K562 (cell line): ENCODE measurements at regions of chr13 and their contacts with region 1.

Region 1: GRCh38 chr13:91369441-91369831 is 21.9 kb downstream of the MIR17HG start:
- DNase-seq: peak in 2 of 4 experiments; percentile 60 to 67
- ATAC-seq: peak; percentile 12; the same call in 2 of the 3 replicates
- H3K4me3 ChIP-seq: no peak overlapping the region
- H3K27ac ChIP-seq: no peak overlapping the region
- H3K4me1 ChIP-seq: peaks cover 0 to 9% of the 10 kb centered on the region in 2 experiments; a peak in 3 of 5 replicates
- H3K27me3 ChIP-seq: no peaks in the 10 kb centered on the region
- CTCF ChIP-seq: no peak
- EP300 ChIP-seq: no peak
- POLR2A ChIP-seq: no peak
- RAD21 ChIP-seq: no peak

Region 2: DNA sequence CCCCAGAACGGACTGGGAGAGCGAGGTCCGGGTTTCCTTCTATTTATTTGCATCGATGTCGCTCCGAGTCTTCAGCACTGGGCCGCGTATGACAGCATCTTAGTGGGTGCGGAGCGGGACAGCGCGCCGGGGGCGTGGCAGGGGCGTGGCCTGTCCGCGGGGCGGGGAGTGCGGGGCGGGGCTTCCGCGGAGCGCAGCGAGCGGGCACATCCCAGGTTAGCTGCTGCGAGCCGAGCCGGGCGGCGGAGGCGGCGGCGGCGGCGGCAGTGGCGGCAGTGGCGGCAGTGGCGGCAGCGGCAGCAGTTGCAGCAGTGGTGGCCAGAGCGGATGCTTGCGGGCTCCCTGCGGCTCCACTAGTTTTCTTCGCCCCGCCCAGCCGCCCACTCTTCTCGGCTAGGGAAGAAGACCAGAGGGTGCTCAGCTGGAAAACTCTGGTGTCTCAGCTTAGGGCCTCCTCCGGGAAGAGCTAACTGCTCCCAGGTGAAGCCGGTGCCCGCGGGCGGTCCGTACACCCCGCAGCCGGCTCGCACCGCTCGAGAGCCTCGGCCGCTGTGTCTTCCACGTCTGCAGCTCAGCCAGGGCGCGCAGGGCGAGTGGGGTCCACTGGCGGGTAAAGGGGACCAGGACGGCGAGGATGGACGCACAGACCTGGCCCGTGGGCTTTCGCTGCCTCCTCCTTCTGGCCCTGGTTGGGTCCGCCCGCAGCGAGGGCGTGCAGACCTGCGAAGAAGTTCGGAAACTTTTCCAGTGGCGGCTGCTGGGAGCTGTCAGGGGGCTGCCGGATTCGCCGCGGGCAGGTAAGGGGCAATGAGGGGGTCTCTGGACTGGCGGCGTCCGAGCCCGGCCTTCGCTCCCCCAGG is 29.2 kb after region 1 on chr13 and contains the start of gene GPC5:
- CTCF ChIA-PET with region 1: no interaction called
- POLR2A ChIA-PET with region 1: interaction called, 4 read pairs
- in situ Hi-C with region 1: no loop called
- intact Hi-C with region 1: loop called (anchors 5 kb)
- DNase-seq: peak; percentile 94 to 100 (median 100)
- ATAC-seq: peak; percentile 100
- H3K4me3 ChIP-seq: peak within 1 kb of the TSS; percentile 28
- H3K27ac ChIP-seq: no peak within 1 kb of the TSS
- H3K4me1 ChIP-seq: peaks cover 0 to 13% of the 10 kb centered on the region in 2 experiments; a peak in 3 of 5 replicates
- H3K27me3 ChIP-seq: peaks cover 13 to 24% of the 10 kb centered on the region in 2 experiments
- CTCF ChIP-seq: no peak
- EP300 ChIP-seq: no peak
- POLR2A ChIP-seq: no peak
- RAD21 ChIP-seq: no peak
- polyA plus RNA-seq, gene GPC5: not detected